ENCODE measurements at regions of chr5 and their contacts with region 1.

Region 1: DNA sequence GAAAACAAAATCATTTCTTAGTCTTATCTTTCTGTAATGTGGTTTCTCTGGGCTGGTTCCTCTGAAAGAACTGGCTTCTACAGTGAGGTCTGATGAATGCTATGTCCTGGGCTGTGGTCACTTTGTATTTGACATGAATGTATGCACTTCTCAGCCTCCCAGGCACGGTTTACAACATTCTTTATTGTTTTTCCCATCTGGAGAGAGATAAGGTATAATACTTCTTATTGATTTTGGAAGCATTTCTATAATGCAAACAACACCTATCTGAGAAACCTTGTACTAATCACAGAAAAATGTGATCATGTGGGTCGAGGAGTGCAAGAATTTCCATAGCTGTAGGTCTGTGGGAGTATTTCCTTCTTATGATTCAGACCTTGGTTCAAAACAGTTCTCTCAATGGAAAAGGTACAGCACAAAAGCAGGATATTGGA is 46.9 kb downstream of the ACTBL2 start:
- DNase-seq: no peak
- H3K4me3 ChIP-seq: no peak overlapping the region
- H3K27ac ChIP-seq: no peak overlapping the region
- H3K4me1 ChIP-seq: no peaks in the 10 kb centered on the region
- CTCF ChIP-seq: no peak

Region 2: DNA sequence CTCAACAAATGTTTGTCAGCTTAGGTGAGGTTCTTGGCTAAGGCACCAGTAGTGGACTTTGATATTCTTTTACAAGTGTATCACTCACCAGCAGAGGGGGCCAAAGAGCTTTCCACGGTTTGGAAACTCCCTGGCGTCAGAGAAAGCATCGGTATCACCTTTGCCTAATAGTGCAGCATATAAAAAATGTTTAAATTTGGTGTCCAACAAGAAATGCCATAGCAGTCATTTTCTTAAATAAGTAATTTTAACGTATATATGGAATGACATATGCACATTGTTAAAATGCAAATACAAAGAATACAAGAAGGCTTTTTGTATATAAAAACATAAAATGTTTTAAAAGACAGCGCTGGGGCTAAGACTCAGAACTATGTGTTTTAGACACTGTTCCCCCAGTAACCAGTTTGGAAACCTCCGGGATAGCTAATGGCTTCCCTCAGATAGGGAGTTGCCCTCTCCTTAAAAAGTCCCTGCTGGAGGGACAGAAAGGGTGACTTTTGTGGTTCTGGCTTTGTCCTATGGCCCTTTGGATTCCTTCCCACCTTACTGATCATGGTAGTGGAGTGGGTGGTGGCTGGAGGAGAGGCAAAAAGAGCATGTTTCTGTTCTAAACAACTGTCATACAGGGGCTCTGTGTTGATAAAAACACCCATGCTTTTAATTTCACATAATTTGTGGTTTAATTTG is 137.3 kb before region 1 on chr5:
- CTCF ChIA-PET with region 1: no interaction called
- POLR2A ChIA-PET with region 1: no interaction called
- intact Hi-C with region 1: loop called (anchors 10 kb)
- DNase-seq: peak; percentile 85
- H3K4me3 ChIP-seq: no peak overlapping the region
- H3K27ac ChIP-seq: no peak overlapping the region
- H3K4me1 ChIP-seq: peaks cover 11% of the 10 kb centered on the region
- CTCF ChIP-seq: peak; percentile 86